ENCODE measurements at regions of chr9 and their contacts with region 1.

Region 1: GRCh38 chr9:34637356-34638137 is at the start of gene SIGMAR1:
- DNase-seq: peak; percentile 94
- H3K4me3 Mint-ChIP-seq: peak within 1 kb of the TSS; percentile 92
- H3K27ac Mint-ChIP-seq: peak within 1 kb of the TSS; percentile 89
- H3K4me1 Mint-ChIP-seq: peaks cover 37% of the 10 kb centered on the region
- H3K27me3 Mint-ChIP-seq: no peaks in the 10 kb centered on the region
- total RNA-seq, gene SIGMAR1: 58.9 TPM

Region 2: GRCh38 chr9:34126207-34127034 is 511.1 kb before region 1 on chr9 and contains the start of gene DCAF12:
- CTCF ChIA-PET with region 1: no interaction called
- intact Hi-C with region 1: loop called (anchors 10 kb)
- DNase-seq: peak; percentile 94
- H3K4me3 Mint-ChIP-seq: peak within 1 kb of the TSS; percentile 93
- H3K27ac Mint-ChIP-seq: peak within 1 kb of the TSS; percentile 93
- H3K4me1 Mint-ChIP-seq: peaks cover 35% of the 10 kb centered on the region
- H3K27me3 Mint-ChIP-seq: no peaks in the 10 kb centered on the region
- total RNA-seq, gene DCAF12: 34.0 to 37.0 TPM

Region 3: DNA sequence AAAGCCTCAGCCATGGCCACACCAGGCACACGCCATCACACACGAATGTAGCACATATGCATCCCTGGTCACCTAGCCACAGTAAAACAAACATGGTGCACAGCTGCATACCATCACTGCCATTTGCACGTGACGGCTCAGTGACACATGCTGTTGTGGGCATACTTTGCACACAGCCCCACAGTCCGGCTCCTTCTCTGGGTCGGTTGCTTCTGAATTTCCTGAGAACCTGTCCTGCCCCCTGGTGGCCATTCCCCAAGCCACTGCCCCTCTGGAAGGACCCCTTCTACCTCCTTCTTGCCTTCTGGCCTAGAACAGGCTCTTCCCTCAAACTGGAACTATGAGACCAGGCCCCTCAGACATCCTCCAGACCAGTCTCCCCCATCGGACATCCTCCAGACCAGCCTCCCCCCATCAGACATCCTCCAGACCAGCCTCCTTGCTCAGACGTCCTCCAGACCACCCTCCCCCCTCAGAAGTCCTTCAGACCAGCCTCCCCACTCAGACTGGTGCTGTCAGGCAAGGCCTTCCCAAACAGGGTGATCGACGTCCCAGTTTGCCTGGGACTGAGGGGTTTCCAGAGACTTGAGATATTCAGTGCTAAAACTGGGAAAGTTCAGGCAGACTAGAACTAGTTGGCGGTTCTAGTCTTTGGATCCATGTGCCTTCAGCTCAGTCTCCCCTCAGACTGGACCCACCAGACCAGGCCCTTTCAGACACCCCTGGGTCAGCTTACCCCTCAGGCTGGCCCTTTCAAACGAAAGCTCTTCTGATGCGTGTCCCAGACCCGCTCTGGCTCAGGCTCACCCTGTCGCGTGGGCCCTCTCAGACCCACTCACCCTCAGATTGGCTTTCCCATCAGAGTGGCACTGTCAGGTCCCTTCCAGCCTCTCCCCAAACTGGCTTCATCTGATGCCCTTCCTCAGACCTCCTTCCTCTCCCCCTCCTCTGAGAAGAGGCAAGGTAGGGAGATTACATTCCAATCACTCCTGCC is 90.4 kb before region 1 on chr9:
- CTCF ChIA-PET with region 1: interaction called, 6 read pairs
- intact Hi-C with region 1: loop called (anchors 1 kb)
- DNase-seq: peak; percentile 77
- H3K4me3 Mint-ChIP-seq: no peak overlapping the region
- H3K27ac Mint-ChIP-seq: no peak overlapping the region
- H3K4me1 Mint-ChIP-seq: no peaks in the 10 kb centered on the region
- H3K27me3 Mint-ChIP-seq: peaks cover 10% of the 10 kb centered on the region

Region 4: GRCh38 chr9:34591248-34591916 is 46.2 kb before region 1 on chr9:
- CTCF ChIA-PET with region 1: interaction called, 18 read pairs
- intact Hi-C with region 1: no loop called
- DNase-seq: peak; percentile 83
- H3K4me3 Mint-ChIP-seq: peak overlapping the region; percentile 58
- H3K27ac Mint-ChIP-seq: no peak overlapping the region
- H3K4me1 Mint-ChIP-seq: peaks cover 22% of the 10 kb centered on the region
- H3K27me3 Mint-ChIP-seq: peaks cover 68% of the 10 kb centered on the region

Region 5: GRCh38 chr9:34611829-34612630 is 25.5 kb before region 1 on chr9 and contains the start of gene RPP25L:
- CTCF ChIA-PET with region 1: interaction called, 123 read pairs
- intact Hi-C with region 1: loop called (anchors 1 kb)
- DNase-seq: peak; percentile 80
- H3K4me3 Mint-ChIP-seq: peak within 1 kb of the TSS; percentile 87
- H3K27ac Mint-ChIP-seq: peak within 1 kb of the TSS; percentile 83
- H3K4me1 Mint-ChIP-seq: peaks cover 21% of the 10 kb centered on the region
- H3K27me3 Mint-ChIP-seq: no peaks in the 10 kb centered on the region
- total RNA-seq, gene RPP25L: 25.7 to 27.0 TPM

Region 6: DNA sequence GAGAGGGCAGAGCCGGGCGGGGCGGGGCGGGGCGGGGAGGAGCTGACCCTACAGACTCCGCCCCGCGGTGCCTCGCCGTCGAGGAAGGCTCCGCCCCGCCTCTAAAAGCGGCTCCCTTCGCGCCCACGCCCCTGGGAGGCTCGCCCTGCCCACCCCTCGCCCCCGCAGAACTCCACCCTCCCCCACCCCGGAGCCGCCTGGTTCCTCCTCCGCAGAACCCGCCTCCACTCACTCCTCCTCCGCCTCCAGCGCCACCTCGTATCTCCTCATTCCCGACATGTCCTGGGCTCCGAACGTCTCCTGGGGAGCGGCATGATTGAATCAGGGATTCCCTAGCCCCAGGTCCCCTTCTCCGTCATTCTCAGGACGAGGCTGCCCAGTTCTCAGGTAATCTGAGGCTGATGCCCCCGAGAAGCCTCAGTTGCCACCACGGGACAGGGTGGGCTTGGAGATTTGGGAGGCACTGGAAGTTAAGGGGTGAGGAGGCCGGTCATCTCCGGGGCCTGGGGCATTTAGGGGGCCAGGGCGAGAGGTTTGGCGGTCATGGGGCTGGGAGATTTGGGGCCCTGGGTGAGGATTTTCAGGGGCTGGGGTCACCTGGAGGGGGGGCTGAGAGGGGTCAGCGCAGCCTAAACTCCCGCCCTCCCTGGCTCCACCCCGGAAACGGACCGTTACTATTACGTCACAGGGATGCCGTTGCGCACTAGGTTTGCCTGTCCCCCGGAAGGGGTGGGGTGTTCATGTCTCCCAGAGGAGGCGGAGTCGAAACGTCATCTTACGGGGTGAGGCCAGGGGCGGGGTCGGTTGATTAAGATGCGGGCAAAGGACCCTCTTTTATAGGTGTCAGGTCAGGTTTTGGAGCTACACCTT is 28.1 kb after region 1 on chr9:
- CTCF ChIA-PET with region 1: interaction called, 12 read pairs
- intact Hi-C with region 1: loop called (anchors 1 kb)
- DNase-seq: peak; percentile 93
- H3K4me3 Mint-ChIP-seq: peak overlapping the region; percentile 77
- H3K27ac Mint-ChIP-seq: peak overlapping the region; percentile 80
- H3K4me1 Mint-ChIP-seq: peaks cover 39% of the 10 kb centered on the region
- H3K27me3 Mint-ChIP-seq: no peaks in the 10 kb centered on the region

Region 7: DNA sequence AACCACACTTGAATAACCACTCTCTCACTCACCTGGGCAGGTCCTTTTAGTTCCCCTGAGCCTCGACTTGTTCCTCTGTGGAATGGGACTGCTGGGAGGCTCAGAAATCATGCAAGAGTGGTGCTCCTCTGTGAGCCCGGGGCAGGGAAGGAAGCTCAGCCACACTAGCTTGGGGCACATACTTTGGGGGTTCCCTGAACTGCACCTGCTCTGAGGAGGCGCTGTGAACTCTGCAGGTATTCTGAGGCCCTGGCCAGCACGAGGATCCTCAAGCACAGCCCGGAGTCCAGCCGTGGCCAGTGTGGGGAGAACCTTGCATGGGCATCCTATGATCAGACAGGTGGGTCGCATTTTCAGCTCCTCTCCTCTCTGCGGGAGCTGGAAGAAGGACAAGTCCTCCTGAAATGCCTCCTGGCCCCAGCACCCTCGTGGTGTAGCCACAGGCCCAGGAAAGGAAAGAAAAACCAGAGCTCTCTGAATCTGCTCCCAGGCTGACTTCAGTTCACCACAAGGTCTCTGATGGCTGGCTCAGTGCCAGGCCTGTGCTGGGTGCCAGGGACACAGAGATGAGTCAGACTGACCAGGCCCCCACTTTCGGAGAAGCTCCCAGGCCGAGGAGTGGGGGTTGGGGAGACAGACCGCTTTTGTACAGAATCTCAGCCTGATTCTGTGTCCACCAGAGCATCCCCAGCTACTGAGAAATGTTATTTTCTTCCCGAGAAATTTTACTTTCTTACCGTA is 1510.9 kb after region 1 on chr9:
- CTCF ChIA-PET with region 1: no interaction called
- intact Hi-C with region 1: no loop called
- DNase-seq: peak; percentile 69
- H3K4me3 Mint-ChIP-seq: no peak overlapping the region
- H3K27ac Mint-ChIP-seq: no peak overlapping the region
- H3K4me1 Mint-ChIP-seq: peaks cover 82% of the 10 kb centered on the region
- H3K27me3 Mint-ChIP-seq: no peaks in the 10 kb centered on the region

Measured in activated naive CD4-positive, alpha-beta T cell treated with anti-CD3 and anti-CD28 coated beads for 36 hours (primary cell).